ENCODE measurements at regions of chr20 and their contacts with region 1.

Region 1: GRCh38 chr20:49384437-49385088 is 97.9 kb downstream of the KCNB1 start:
- DNase-seq: peak; percentile 81
- H3K4me3 Mint-ChIP-seq: no peak overlapping the region
- H3K27ac Mint-ChIP-seq: no peak overlapping the region
- H3K4me1 Mint-ChIP-seq: no peaks in the 10 kb centered on the region
- H3K27me3 Mint-ChIP-seq: peaks cover 20% of the 10 kb centered on the region

Region 2: DNA sequence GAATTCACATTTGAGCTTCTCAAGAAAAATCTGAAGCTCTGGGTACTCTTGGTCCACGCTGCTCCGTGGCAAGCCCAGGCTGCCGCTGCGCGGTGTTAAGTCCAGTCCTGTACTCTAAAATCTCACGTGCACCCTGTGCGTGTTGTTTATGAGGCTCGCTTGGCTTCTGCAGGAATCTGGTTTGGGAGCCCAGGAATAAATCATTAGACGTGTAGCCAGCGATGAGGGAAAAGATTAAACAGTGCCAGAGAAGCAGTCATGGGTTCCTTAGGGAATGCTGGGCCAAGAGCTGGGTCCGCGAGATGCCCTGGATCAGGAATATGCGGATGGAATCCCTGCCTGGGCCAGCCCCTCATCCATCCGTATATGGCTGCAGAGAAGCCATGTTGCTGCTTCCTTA is 10.6 kb after region 1 on chr20:
- CTCF ChIA-PET with region 1: interaction called, 16 read pairs
- POLR2A ChIA-PET with region 1: no interaction called
- intact Hi-C with region 1: no loop called
- DNase-seq: no peak
- H3K4me3 Mint-ChIP-seq: no peak overlapping the region
- H3K27ac Mint-ChIP-seq: no peak overlapping the region
- H3K4me1 Mint-ChIP-seq: no peaks in the 10 kb centered on the region
- H3K27me3 Mint-ChIP-seq: peaks cover 15% of the 10 kb centered on the region